Panc1 (cell line): ENCODE measurements at regions of chr1 and their contacts with region 1.

Region 1: DNA sequence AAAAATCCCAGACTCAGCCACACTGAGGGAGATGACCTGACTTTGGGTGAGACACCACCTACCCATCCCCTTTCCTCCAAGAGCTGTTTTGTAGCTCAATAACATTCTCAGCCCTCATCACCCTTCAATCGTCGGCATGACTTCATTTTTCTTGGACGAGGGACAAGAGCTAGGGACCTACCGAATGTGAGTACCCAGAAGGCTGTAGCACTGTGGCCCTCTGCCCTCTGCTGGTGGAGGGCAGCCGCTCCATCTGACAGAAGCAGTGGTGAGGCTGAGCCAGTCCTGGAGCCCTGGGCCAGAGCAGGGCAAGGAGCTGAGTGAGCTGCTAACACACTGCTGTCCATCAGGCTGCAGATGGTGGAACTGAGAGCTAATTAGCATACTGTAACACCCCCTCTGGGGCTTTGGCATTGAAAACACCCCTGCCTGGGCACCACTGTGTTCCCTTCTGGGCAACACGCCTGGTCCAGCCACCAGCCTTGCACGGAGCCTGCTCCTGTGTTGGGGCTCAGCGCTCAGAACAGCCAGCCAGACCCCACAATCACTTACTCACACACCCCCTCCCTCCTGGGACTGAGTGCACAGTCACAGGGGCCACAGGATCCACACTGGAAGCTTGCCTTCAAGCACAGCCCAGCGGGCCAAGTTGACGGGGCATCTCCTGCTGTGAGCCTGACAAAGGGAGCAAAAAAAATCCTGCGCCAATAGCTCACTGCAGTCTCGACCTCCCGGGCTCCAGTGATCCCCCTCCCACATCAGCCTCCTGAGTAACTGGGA is 18.3 kb upstream of the ALPL start:
- DNase-seq: no peak
- ATAC-seq: peak; percentile 92
- H3K4me3 ChIP-seq: no peak overlapping the region
- H3K27ac ChIP-seq: no peak overlapping the region
- H3K4me1 ChIP-seq: no peaks in the 10 kb centered on the region
- H3K27me3 ChIP-seq: no peaks in the 10 kb centered on the region; the same call in 1 of the 2 replicates
- CTCF ChIP-seq: peak; percentile 76

Region 2: DNA sequence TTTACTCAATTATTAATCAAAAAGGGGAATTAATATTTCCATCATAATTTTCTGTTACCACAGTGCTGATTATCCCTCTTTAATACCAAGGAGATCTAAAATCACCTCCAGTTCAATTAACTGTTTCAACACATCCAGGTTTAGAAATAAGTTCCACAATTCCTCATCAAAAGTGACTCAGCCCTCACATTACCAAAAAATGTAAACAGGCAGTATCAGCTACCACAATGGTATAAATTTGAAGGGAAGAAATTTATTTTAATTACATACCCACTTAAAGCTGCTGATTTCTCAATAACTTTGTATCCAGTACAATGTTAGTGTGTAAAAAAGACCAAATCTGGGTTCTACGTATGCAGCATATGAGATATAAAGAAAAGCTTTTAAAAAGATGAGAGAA is 366.1 kb before region 1 on chr1:
- CTCF ChIA-PET with region 1: no interaction called
- POLR2A ChIA-PET with region 1: no interaction called
- in situ Hi-C with region 1: no loop called
- intact Hi-C with region 1: no loop called
- DNase-seq: no peak
- ATAC-seq: no peak
- H3K4me3 ChIP-seq: no peak overlapping the region
- H3K27ac ChIP-seq: no peak overlapping the region
- H3K4me1 ChIP-seq: no peaks in the 10 kb centered on the region
- H3K27me3 ChIP-seq: no peaks in the 10 kb centered on the region
- CTCF ChIP-seq: no peak

Region 3: GRCh38 chr1:21378705-21379494 is 112.1 kb before region 1 on chr1:
- CTCF ChIA-PET with region 1: interaction called, 3 read pairs
- POLR2A ChIA-PET with region 1: no interaction called
- in situ Hi-C with region 1: no loop called
- intact Hi-C with region 1: loop called (anchors 10 kb)
- DNase-seq: no peak
- ATAC-seq: no peak
- H3K4me3 ChIP-seq: no peak overlapping the region
- H3K27ac ChIP-seq: no peak overlapping the region
- H3K4me1 ChIP-seq: no peaks in the 10 kb centered on the region
- H3K27me3 ChIP-seq: no peaks in the 10 kb centered on the region; the same call in 1 of the 2 replicates
- CTCF ChIP-seq: no peak